ENCODE measurements at regions of chr1 and their contacts with region 1.

Region 1: GRCh38 chr1:78839704-78840277 is 166.7 kb downstream of the ADGRL4 start:
- DNase-seq: peak; percentile 39 to 67 (median 55)
- H3K4me3 ChIP-seq: no peak overlapping the region
- H3K27ac ChIP-seq: no peak overlapping the region
- H3K4me1 ChIP-seq: peaks cover 0 to 11% (median 0%) of the 10 kb centered on the region in 4 experiments
- H3K27me3 ChIP-seq: no peaks in the 10 kb centered on the region

Region 2: GRCh38 chr1:79197421-79197820 is 357.6 kb after region 1 on chr1:
- CTCF ChIA-PET with region 1: interaction called, 15 read pairs
- POLR2A ChIA-PET with region 1: no interaction called
- DNase-seq: peak; percentile 14 to 60 (median 45)
- H3K4me3 ChIP-seq: no peak overlapping the region
- H3K27ac ChIP-seq: no peak overlapping the region
- H3K4me1 ChIP-seq: peaks cover 0 to 11% (median 5%) of the 10 kb centered on the region in 4 experiments
- H3K27me3 ChIP-seq: no peaks in the 10 kb centered on the region

Region 3: DNA sequence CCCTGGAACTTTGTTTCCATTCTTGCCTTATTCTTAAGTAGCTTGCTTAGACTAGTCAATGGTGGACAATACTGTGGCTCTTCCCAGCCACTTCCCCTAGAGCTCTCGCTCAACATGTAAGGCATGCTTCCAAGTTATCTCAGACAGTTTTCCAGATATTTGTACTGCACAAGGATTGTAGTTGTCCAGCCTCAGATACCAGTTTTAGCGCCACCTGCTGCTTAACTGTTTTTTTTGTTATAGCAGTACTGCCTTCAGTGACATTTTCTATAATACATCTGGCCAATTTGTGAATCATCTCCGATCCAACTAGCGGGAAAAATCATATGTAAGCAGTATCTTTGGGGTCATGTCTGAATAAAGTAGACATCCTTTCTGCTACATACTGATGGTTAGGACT is 513.4 kb after region 1 on chr1:
- CTCF ChIA-PET with region 1: interaction called, 20 read pairs
- POLR2A ChIA-PET with region 1: no interaction called
- DNase-seq: peak; percentile 15 to 37 (median 18)
- H3K4me3 ChIP-seq: no peak overlapping the region
- H3K27ac ChIP-seq: no peak overlapping the region
- H3K4me1 ChIP-seq: no peaks in the 10 kb centered on the region
- H3K27me3 ChIP-seq: no peaks in the 10 kb centered on the region